T-cell (primary cell): ENCODE measurements at regions of chr6 and their contacts with region 1.

Region 1: GRCh38 chr6:5260661-5261544 is at the starts of genes FARS2 and LYRM4:
- DNase-seq: peak; percentile 78 to 98 (median 88)
- ATAC-seq: peak; percentile 77 to 87 (median 81)
- H3K4me3 ChIP-seq: peak within 1 kb of the TSS; percentile 62 to 91
- H3K4me3 Mint-ChIP-seq: peak within 1 kb of the TSS; percentile 98
- H3K27ac ChIP-seq: peak within 1 kb of the TSS; percentile 97
- H3K27ac Mint-ChIP-seq: peak within 1 kb of the TSS; percentile 100
- H3K4me1 ChIP-seq: peaks cover 11 to 13% of the 10 kb centered on the region in 2 experiments
- H3K4me1 Mint-ChIP-seq: peaks cover 26 to 46% (median 39%) of the 10 kb centered on the region in 3 donors
- H3K27me3 ChIP-seq: no peaks in the 10 kb centered on the region
- H3K27me3 Mint-ChIP-seq: no peaks in the 10 kb centered on the region
- total RNA-seq, gene FARS2: 17.9 to 24.2 (median 20.3) TPM
- total RNA-seq, gene LYRM4: 17.7 to 25.6 (median 20.4) TPM

Region 2: GRCh38 chr6:5569491-5569890 is 308.6 kb after region 1 on chr6:
- CTCF ChIA-PET with region 1: no interaction called
- POLR2A ChIA-PET with region 1: no interaction called
- DNase-seq: no peak
- ATAC-seq: no peak
- H3K4me3 ChIP-seq: no peak overlapping the region
- H3K4me3 Mint-ChIP-seq: no peak overlapping the region
- H3K27ac ChIP-seq: no peak overlapping the region
- H3K27ac Mint-ChIP-seq: no peak overlapping the region
- H3K4me1 ChIP-seq: no peaks in the 10 kb centered on the region
- H3K4me1 Mint-ChIP-seq: peaks cover 11 to 32% (median 14%) of the 10 kb centered on the region in 3 donors
- H3K27me3 ChIP-seq: no peaks in the 10 kb centered on the region
- H3K27me3 Mint-ChIP-seq: no peaks in the 10 kb centered on the region

Region 3: DNA sequence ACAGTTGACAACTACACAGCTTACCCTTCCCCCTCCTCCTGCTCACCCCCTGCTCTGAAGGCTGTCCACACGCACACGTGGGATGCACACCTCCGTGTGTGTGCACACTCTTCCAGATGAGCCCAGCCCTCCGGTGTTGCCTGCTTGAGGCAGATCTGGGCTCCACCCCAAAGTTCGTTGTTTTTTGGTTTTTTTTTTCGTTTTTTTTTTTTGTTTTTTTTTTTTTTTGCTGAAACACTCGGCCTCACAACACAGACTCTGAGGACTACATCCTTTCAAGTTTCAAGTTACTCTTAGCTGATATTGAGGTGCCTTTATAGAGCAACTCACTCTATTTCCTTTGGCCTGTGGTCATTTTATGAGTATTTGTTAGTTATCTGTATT is 1935.1 kb after region 1 on chr6:
- CTCF ChIA-PET with region 1: no interaction called
- POLR2A ChIA-PET with region 1: interaction called in 1 of 2 experiments, 11 read pairs
- DNase-seq: peak in 20 of 35 experiments; percentile 7 to 60 (median 22)
- ATAC-seq: peak; percentile 69 to 83 (median 74)
- H3K4me3 ChIP-seq: no peak overlapping the region
- H3K4me3 Mint-ChIP-seq: peak overlapping the region in 2 of 3 donors; percentile 51 to 81
- H3K27ac ChIP-seq: no peak overlapping the region
- H3K27ac Mint-ChIP-seq: peak overlapping the region; percentile 67 to 87
- H3K4me1 ChIP-seq: peaks cover 11 to 24% of the 10 kb centered on the region in 2 experiments
- H3K4me1 Mint-ChIP-seq: peaks cover 39 to 55% (median 45%) of the 10 kb centered on the region in 3 donors
- H3K27me3 ChIP-seq: no peaks in the 10 kb centered on the region
- H3K27me3 Mint-ChIP-seq: no peaks in the 10 kb centered on the region